ENCODE measurements at regions of chr3 and their contacts with region 1.

Region 1: GRCh38 chr3:196979545-196979944 is 10.9 kb upstream of the PIGZ start:
- DNase-seq: no peak
- ATAC-seq: no peak
- H3K4me3 Mint-ChIP-seq: no peak overlapping the region
- H3K27ac Mint-ChIP-seq: no peak overlapping the region
- H3K4me1 Mint-ChIP-seq: peaks cover 11% of the 10 kb centered on the region
- H3K27me3 Mint-ChIP-seq: peaks cover 21% of the 10 kb centered on the region
- CTCF ChIP-seq: no peak

Region 2: GRCh38 chr3:197029511-197030167 is 50.1 kb after region 1 on chr3 and contains the start of gene MELTF:
- CTCF ChIA-PET with region 1: interaction called, 5 read pairs
- POLR2A ChIA-PET with region 1: no interaction called
- intact Hi-C with region 1: loop called (anchors 1 kb)
- DNase-seq: peak; percentile 83
- ATAC-seq: peak; percentile 73
- H3K4me3 Mint-ChIP-seq: peak within 1 kb of the TSS; percentile 82
- H3K27ac Mint-ChIP-seq: peak within 1 kb of the TSS; percentile 56
- H3K4me1 Mint-ChIP-seq: peaks cover 23% of the 10 kb centered on the region
- H3K27me3 Mint-ChIP-seq: peaks cover 24% of the 10 kb centered on the region
- CTCF ChIP-seq: peak; percentile 93
- total RNA-seq, gene MELTF: 50.0 and 61.5 TPM in 2 replicates